MCF 10A (cell line): ENCODE measurements at regions of chr11 and their contacts with region 1.

Region 1: GRCh38 chr11:77361184-77361583 is 59.7 kb upstream of the GDPD4 start:
- DNase-seq: no peak
- H3K4me3 Mint-ChIP-seq: no peak overlapping the region
- H3K27ac Mint-ChIP-seq: no peak overlapping the region
- H3K4me1 Mint-ChIP-seq: peaks cover 7% of the 10 kb centered on the region
- H3K27me3 Mint-ChIP-seq: no peaks in the 10 kb centered on the region
- CTCF ChIP-seq: no peak

Region 2: GRCh38 chr11:77187776-77188632 is 173.2 kb before region 1 on chr11:
- CTCF ChIA-PET with region 1: no interaction called
- POLR2A ChIA-PET with region 1: no interaction called
- intact Hi-C with region 1: loop called (anchors 10 kb)
- DNase-seq: peak; percentile 83
- H3K4me3 Mint-ChIP-seq: no peak overlapping the region
- H3K27ac Mint-ChIP-seq: no peak overlapping the region
- H3K4me1 Mint-ChIP-seq: no peaks in the 10 kb centered on the region
- H3K27me3 Mint-ChIP-seq: peaks cover 12% of the 10 kb centered on the region
- CTCF ChIP-seq: peak; percentile 79

Region 3: DNA sequence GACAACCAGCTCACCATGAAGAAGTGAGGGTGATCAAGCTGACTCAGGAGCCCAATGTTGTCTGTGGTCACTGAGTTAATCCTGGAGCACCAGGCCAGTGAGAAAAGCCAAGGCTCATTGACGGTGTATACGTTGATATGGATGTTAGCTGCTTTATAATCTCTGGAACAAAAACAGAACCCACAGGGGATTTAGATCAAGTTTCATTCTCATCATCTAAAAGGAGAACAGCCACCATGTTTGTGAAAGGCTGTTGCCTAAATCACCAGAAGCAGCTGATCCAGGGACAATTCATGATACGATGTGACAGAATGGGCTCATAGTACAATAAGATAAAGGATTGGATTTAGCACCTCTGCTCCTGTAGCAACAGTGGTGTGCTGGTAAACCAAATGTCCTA is 128.2 kb before region 1 on chr11:
- CTCF ChIA-PET with region 1: no interaction called
- POLR2A ChIA-PET with region 1: no interaction called
- intact Hi-C with region 1: no loop called
- DNase-seq: no peak
- H3K4me3 Mint-ChIP-seq: no peak overlapping the region
- H3K27ac Mint-ChIP-seq: no peak overlapping the region
- H3K4me1 Mint-ChIP-seq: no peaks in the 10 kb centered on the region
- H3K27me3 Mint-ChIP-seq: no peaks in the 10 kb centered on the region
- CTCF ChIP-seq: no peak

Region 4: GRCh38 chr11:77418155-77418970 is 57.2 kb after region 1 on chr11:
- CTCF ChIA-PET with region 1: no interaction called
- POLR2A ChIA-PET with region 1: no interaction called
- intact Hi-C with region 1: no loop called
- DNase-seq: no peak
- H3K4me3 Mint-ChIP-seq: no peak overlapping the region
- H3K27ac Mint-ChIP-seq: no peak overlapping the region
- H3K4me1 Mint-ChIP-seq: no peaks in the 10 kb centered on the region
- H3K27me3 Mint-ChIP-seq: no peaks in the 10 kb centered on the region
- CTCF ChIP-seq: no peak